GM12878 (cell line): ENCODE measurements at regions of chr17 and their contacts with region 1.

Region 1: DNA sequence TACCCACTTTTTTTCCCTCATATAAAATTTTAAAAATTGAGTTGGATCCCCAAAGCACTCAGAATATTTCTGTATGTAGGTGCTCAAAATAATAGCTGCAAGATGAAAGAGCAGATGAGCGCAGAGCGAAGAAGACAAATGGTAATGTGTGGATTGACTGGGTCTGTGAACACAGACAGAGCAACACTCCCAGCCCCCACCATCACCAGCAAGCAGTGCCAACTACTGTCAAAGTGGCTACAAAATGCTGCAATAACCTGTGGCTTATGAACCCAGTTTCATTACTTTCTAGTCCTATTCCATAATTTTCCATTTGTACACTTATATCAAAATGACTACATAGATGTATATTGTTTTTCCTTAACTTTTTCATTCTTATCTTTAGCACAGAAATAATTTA is 137.2 kb downstream of the MYO1D start:
- DNase-seq: no peak
- ATAC-seq: no peak
- H3K4me3 ChIP-seq: no peak overlapping the region
- H3K27ac ChIP-seq: no peak overlapping the region
- H3K4me1 ChIP-seq: no peaks in the 10 kb centered on the region
- H3K27me3 ChIP-seq: no peaks in the 10 kb centered on the region
- CTCF ChIP-seq: no peak
- EP300 ChIP-seq: no peak
- POLR2A ChIP-seq: no peak
- RAD21 ChIP-seq: no peak

Region 2: DNA sequence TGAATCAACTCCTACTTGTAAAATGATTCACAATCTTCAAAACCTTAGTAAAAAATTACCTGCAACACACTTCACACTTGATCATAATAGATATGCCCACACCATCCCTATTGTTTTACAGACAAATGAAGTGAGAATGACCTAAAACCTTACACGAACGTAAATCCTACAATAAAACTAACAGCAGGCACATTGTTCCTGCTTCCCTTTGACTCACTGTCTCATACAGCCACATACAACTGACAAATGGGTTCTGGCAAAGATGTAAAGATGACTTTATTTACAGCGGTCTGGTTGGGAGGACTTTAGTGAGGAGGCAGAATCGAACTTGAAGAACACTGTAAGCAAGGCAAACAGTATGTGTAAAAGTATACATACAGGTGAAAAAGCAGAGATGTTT is 51.5 kb before region 1 on chr17:
- CTCF ChIA-PET with region 1: no interaction called
- POLR2A ChIA-PET with region 1: no interaction called
- RAD21 ChIA-PET with region 1: no interaction called
- SMC1A ChIA-PET with region 1: no interaction called
- in situ Hi-C with region 1: no loop called
- intact Hi-C with region 1: loop called (anchors 5 kb)
- DNase-seq: no peak
- ATAC-seq: no peak
- H3K4me3 ChIP-seq: no peak overlapping the region
- H3K27ac ChIP-seq: no peak overlapping the region
- H3K4me1 ChIP-seq: no peaks in the 10 kb centered on the region
- H3K27me3 ChIP-seq: no peaks in the 10 kb centered on the region
- CTCF ChIP-seq: no peak
- EP300 ChIP-seq: no peak
- POLR2A ChIP-seq: no peak
- RAD21 ChIP-seq: no peak

Region 3: DNA sequence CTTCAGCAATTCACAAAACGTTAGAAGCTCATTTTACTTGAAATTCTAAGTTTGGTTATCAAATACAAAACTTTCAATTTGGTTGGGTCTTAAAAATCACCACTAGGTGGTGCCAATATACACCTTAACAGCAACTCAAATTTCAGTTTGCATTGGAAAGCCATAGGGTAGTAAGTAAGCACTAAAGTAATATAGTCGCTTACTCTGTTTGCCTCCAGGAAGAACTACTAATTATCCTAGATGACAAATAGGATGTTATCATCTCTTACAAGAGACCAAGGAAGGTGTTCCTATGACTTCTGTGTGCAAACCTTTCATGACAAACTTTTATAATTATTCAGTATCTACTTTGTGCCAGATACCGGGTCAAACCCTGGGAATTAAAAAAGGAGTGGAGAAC is 43.9 kb after region 1 on chr17:
- CTCF ChIA-PET with region 1: no interaction called
- POLR2A ChIA-PET with region 1: no interaction called
- RAD21 ChIA-PET with region 1: no interaction called
- SMC1A ChIA-PET with region 1: no interaction called
- in situ Hi-C with region 1: no loop called
- intact Hi-C with region 1: no loop called
- DNase-seq: peak; percentile 32
- ATAC-seq: peak; percentile 82
- H3K4me3 ChIP-seq: no peak overlapping the region
- H3K27ac ChIP-seq: no peak overlapping the region
- H3K4me1 ChIP-seq: peaks cover 3% of the 10 kb centered on the region
- H3K27me3 ChIP-seq: no peaks in the 10 kb centered on the region
- CTCF ChIP-seq: peak; percentile 41 to 80 (median 60); a peak in 5 of 6 replicates
- EP300 ChIP-seq: no peak
- POLR2A ChIP-seq: no peak
- RAD21 ChIP-seq: peak; percentile 88

Region 4: GRCh38 chr17:33401249-33401648 is 661.5 kb after region 1 on chr17:
- CTCF ChIA-PET with region 1: no interaction called
- POLR2A ChIA-PET with region 1: no interaction called
- RAD21 ChIA-PET with region 1: no interaction called
- SMC1A ChIA-PET with region 1: no interaction called
- in situ Hi-C with region 1: no loop called
- intact Hi-C with region 1: no loop called
- DNase-seq: no peak
- ATAC-seq: no peak
- H3K4me3 ChIP-seq: no peak overlapping the region
- H3K27ac ChIP-seq: no peak overlapping the region
- H3K4me1 ChIP-seq: no peaks in the 10 kb centered on the region
- H3K27me3 ChIP-seq: no peaks in the 10 kb centered on the region; a peak in 1 of 4 replicates
- CTCF ChIP-seq: no peak
- EP300 ChIP-seq: no peak
- POLR2A ChIP-seq: no peak
- RAD21 ChIP-seq: no peak

Region 5: DNA sequence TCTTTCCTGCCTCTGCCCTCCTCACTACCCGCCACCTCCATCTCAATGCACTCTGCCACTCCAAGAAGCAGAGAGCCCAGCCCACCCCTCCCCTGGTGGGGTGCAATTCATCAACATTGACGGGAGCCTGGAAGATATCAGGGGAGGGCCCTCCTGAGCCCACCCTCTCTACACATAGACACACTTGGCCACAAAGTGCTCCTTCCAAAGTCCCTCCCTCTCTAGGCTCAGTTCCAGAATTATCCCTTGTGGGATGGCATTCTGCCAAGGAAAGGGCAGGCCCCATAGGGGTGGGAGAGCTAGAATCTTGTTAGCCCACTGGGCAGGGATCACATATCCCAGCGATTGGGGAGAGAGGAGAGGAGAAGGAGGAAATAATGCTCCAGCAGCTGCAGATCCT is 1905.9 kb after region 1 on chr17:
- CTCF ChIA-PET with region 1: no interaction called
- POLR2A ChIA-PET with region 1: no interaction called
- RAD21 ChIA-PET with region 1: no interaction called
- SMC1A ChIA-PET with region 1: no interaction called
- in situ Hi-C with region 1: no loop called
- intact Hi-C with region 1: no loop called
- DNase-seq: no peak
- ATAC-seq: no peak
- H3K4me3 ChIP-seq: no peak overlapping the region
- H3K27ac ChIP-seq: no peak overlapping the region
- H3K4me1 ChIP-seq: no peaks in the 10 kb centered on the region
- H3K27me3 ChIP-seq: peaks cover 3% of the 10 kb centered on the region in 2 experiments; a peak in 2 of 4 replicates
- CTCF ChIP-seq: no peak
- EP300 ChIP-seq: no peak
- POLR2A ChIP-seq: no peak
- RAD21 ChIP-seq: no peak